ENCODE measurements at regions of chr18 and their contacts with region 1.

Region 1: GRCh38 chr18:31555971-31556747 is 35.5 kb upstream of the TTR start:
- DNase-seq: peak; percentile 35
- H3K4me3 Mint-ChIP-seq: no peak overlapping the region
- H3K27ac Mint-ChIP-seq: no peak overlapping the region
- H3K4me1 Mint-ChIP-seq: no peaks in the 10 kb centered on the region
- H3K27me3 Mint-ChIP-seq: peaks cover 6% of the 10 kb centered on the region

Region 2: DNA sequence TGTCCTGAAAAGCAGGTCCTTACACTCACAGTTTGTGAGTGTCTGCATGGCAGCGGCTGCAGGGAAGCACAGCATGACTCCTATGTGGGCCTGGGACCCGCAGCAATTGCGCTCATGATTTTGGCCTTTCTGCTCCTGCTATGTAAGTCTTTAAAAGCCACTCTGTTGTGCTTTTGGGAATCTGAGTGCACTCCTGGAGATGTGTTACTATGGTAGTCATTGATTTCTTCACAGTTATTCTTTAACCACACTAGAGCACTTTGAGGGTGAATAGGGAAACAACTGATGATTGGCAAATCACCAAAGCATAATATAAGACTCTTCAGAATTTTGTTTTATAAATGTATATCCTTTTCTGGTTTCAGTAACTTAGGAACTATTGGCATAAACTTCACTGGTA is 17.3 kb before region 1 on chr18:
- CTCF ChIA-PET with region 1: interaction called, 10 read pairs
- POLR2A ChIA-PET with region 1: no interaction called
- DNase-seq: no peak
- H3K4me3 Mint-ChIP-seq: no peak overlapping the region
- H3K27ac Mint-ChIP-seq: no peak overlapping the region
- H3K4me1 Mint-ChIP-seq: no peaks in the 10 kb centered on the region
- H3K27me3 Mint-ChIP-seq: no peaks in the 10 kb centered on the region

Region 3: GRCh38 chr18:31722369-31722957 is 166.3 kb after region 1 on chr18:
- CTCF ChIA-PET with region 1: interaction called, 51 read pairs
- POLR2A ChIA-PET with region 1: no interaction called
- DNase-seq: peak; percentile 79
- H3K4me3 Mint-ChIP-seq: no peak overlapping the region
- H3K27ac Mint-ChIP-seq: no peak overlapping the region
- H3K4me1 Mint-ChIP-seq: no peaks in the 10 kb centered on the region
- H3K27me3 Mint-ChIP-seq: peaks cover 29% of the 10 kb centered on the region

Region 4: DNA sequence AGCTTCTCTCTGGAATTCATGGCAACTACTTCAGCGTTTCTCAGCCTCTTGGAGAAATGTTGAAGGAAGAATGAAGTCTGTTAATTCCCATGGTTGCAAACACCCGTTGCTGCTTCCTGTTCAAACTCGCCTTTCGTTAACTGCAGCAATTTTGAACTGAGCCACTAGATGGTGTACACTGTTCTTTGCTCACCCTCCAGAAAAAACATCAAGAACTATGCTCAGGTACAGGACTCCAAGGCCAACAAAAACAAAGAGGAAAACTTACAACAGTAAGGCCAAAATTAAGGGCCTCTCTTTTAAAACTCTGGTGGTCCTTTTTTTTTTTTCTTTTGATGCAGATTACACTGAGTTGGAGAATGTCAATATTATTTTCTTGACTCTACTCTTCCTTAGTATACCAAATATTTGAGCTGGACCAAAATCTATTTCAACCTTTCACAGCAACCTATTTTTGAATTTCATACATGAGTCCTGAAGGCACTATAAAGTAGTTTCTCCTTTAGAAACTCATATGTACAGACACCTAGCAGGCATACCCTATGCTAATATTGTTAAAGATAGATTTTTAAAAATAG is 1158.5 kb after region 1 on chr18:
- CTCF ChIA-PET with region 1: no interaction called
- POLR2A ChIA-PET with region 1: no interaction called
- DNase-seq: peak; percentile 20
- H3K4me3 Mint-ChIP-seq: no peak overlapping the region
- H3K27ac Mint-ChIP-seq: no peak overlapping the region
- H3K4me1 Mint-ChIP-seq: no peaks in the 10 kb centered on the region
- H3K27me3 Mint-ChIP-seq: no peaks in the 10 kb centered on the region